Left cardiac atrium (tissue), 4 donors: ENCODE measurements at regions of chr5 and their contacts with region 1.

Region 1: DNA sequence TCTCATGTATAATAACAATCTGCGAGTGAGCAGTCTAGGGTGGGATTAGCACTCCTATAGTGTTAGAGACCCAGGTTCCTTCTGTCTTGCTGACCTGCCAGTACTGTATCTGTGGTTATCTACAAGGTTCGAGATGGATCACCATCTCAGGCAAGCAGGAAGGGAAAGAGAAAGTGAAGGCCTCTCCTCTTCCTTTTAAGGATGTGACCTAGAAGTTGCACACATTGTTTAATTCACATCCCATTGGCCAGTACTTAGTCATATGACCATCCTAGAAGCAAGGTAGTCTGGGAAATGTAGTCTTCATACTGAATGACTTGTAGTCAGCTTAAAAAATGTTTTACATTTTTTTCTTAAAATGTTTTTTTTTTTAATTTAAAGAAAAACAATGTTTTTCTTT is 168.6 kb downstream of the CARTPT start:
- DNase-seq: no peak
- ATAC-seq: peak; percentile 39 to 55

Region 2: GRCh38 chr5:71830681-71831539 is 56.8 kb before region 1 on chr5:
- intact Hi-C with region 1: loop called in 1 of 2 experiments (anchors 10 kb)
- DNase-seq: peak; percentile 73
- ATAC-seq: peak; percentile 94 to 95